PC-3 (cell line): ENCODE measurements at regions of chr18 and their contacts with region 1.

Region 1: GRCh38 chr18:50051288-50051687 is 143.7 kb downstream of the MYO5B start:
- DNase-seq: peak; percentile 36
- ATAC-seq: peak; percentile 55; the same call in 1 of the 2 replicates
- H3K4me3 ChIP-seq: no peak overlapping the region
- H3K27ac ChIP-seq: no peak overlapping the region
- H3K4me1 ChIP-seq: no peaks in the 10 kb centered on the region
- H3K27me3 ChIP-seq: no peaks in the 10 kb centered on the region
- CTCF ChIP-seq: peak; percentile 46

Region 2: DNA sequence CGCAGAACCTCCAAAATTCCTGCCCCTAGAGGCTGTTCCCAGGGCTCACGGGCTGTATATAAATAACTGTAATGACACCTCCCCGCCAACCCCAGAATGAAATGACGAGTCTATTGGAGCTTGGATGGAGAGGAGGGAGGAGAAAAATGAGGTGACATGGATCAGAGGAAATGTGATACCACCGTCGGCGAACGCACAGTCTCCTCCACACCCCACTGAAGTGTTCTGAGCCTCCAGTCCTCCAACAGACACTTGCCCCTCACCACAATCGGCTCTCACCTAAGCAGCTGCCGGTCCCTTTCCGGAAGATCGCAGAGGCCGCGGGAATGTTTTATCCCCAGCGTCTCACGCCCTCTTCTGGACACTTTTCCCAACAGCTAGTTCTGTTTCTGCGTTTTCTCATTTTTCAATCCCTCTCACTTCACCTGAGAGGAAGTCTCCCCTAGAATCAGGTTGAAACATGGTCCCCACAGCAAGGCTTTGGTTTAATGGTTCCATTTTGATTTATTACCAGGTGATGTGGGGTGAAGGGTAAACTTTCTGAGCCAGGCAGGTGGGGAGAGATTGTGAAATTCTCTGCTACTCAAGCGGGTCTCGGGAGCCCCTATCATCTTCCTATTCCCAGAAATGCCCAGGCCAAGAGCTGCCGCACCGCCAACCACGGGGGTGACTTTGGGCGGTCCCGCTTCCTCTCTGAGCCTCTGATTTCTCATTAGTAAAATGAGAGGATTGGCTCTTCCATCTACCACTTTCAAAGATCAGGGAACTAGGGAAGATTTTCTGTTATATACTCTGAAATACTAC is 152.7 kb after region 1 on chr18:
- CTCF ChIA-PET with region 1: no interaction called
- POLR2A ChIA-PET with region 1: no interaction called
- intact Hi-C with region 1: loop called (anchors 2 kb)
- DNase-seq: peak; percentile 52
- ATAC-seq: peak; percentile 62
- H3K4me3 ChIP-seq: peak overlapping the region; percentile 35; the same call in 1 of the 2 replicates
- H3K27ac ChIP-seq: no peak overlapping the region
- H3K4me1 ChIP-seq: no peaks in the 10 kb centered on the region
- H3K27me3 ChIP-seq: no peaks in the 10 kb centered on the region
- CTCF ChIP-seq: peak; percentile 63